ENCODE measurements at regions of chr5 and their contacts with region 1.

Region 1: GRCh38 chr5:112160652-112161391 is 258.3 kb downstream of the EPB41L4A start:
- DNase-seq: peak; percentile 95
- ATAC-seq: peak; percentile 99
- H3K4me3 ChIP-seq: peak overlapping the region; percentile 71 to 97 (median 90)
- H3K4me3 Mint-ChIP-seq: peak overlapping the region; percentile 96
- H3K27ac ChIP-seq: peak overlapping the region; percentile 52 to 83
- H3K27ac Mint-ChIP-seq: peak overlapping the region; percentile 90
- H3K4me1 ChIP-seq: peaks cover 14 to 20% of the 10 kb centered on the region in 2 donors
- H3K4me1 Mint-ChIP-seq: peaks cover 24% of the 10 kb centered on the region
- H3K27me3 ChIP-seq: no peaks in the 10 kb centered on the region
- H3K27me3 Mint-ChIP-seq: peaks cover 4% of the 10 kb centered on the region
- CTCF ChIP-seq: peak; percentile 88

Region 2: GRCh38 chr5:111757355-111758283 is 403.2 kb before region 1 on chr5:
- CTCF ChIA-PET with region 1: interaction called, 3 read pairs
- POLR2A ChIA-PET with region 1: interaction called, 4 read pairs
- intact Hi-C with region 1: loop called (anchors 1 kb)
- DNase-seq: peak; percentile 90
- ATAC-seq: peak; percentile 80
- H3K4me3 ChIP-seq: peak overlapping the region; percentile 68 to 83 (median 77)
- H3K4me3 Mint-ChIP-seq: peak overlapping the region; percentile 92
- H3K27ac ChIP-seq: peak overlapping the region; percentile 76 to 81
- H3K27ac Mint-ChIP-seq: peak overlapping the region; percentile 91
- H3K4me1 ChIP-seq: peaks cover 20 to 22% of the 10 kb centered on the region in 2 donors
- H3K4me1 Mint-ChIP-seq: peaks cover 21% of the 10 kb centered on the region
- H3K27me3 ChIP-seq: no peaks in the 10 kb centered on the region
- H3K27me3 Mint-ChIP-seq: peaks cover 7% of the 10 kb centered on the region
- CTCF ChIP-seq: no peak

Region 3: DNA sequence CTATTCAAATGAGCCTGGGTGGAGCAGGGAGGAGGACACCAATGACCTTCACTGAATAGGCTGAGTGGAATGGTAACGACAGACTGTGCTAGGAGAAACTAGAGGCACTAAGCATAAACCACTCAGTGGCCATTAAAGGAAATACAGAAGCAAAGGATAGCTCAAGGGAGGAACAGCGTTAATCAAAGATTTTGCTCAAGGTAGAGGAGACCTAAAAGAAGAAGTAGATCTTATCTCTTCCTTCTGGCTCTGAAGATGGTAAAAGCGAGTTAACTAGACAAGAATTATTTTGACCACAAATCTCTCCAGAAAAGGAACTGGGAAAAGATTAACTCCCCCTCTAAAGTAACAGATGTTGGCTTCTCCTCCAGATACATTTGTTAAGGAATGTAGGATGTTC is 41.3 kb before region 1 on chr5:
- CTCF ChIA-PET with region 1: no interaction called
- POLR2A ChIA-PET with region 1: no interaction called
- intact Hi-C with region 1: no loop called
- DNase-seq: no peak
- ATAC-seq: no peak
- H3K4me3 ChIP-seq: no peak overlapping the region
- H3K4me3 Mint-ChIP-seq: no peak overlapping the region
- H3K27ac ChIP-seq: no peak overlapping the region
- H3K27ac Mint-ChIP-seq: no peak overlapping the region
- H3K4me1 ChIP-seq: no peaks in the 10 kb centered on the region
- H3K4me1 Mint-ChIP-seq: no peaks in the 10 kb centered on the region
- H3K27me3 ChIP-seq: peaks cover 0 to 2% (median 0%) of the 10 kb centered on the region in 4 experiments
- H3K27me3 Mint-ChIP-seq: peaks cover 15% of the 10 kb centered on the region
- CTCF ChIP-seq: no peak

Region 4: DNA sequence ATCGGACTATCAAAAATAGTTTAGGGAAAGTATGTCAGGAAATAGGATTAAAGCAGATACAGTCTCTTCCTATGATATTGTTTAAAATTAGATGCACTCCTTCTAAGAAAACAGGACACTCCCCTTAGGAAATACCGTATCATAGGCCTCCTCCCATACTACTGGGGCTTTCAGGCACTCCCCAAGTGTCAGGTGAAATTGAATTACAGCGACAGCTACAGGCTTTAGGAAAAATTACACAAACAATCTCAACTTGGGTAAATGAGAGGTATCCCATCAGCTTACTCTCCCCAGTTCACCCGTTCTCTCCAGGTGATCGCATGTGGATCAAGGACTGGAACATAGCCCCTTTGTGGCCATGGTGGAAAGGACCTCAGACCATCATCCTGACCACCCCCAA is 368.7 kb after region 1 on chr5:
- CTCF ChIA-PET with region 1: interaction called, 3 read pairs
- POLR2A ChIA-PET with region 1: no interaction called
- intact Hi-C with region 1: loop called (anchors 5 kb)
- DNase-seq: peak; percentile 56
- ATAC-seq: no peak
- H3K4me3 ChIP-seq: no peak overlapping the region
- H3K4me3 Mint-ChIP-seq: no peak overlapping the region
- H3K27ac ChIP-seq: peak overlapping the region in 1 of 2 donors; percentile 61
- H3K27ac Mint-ChIP-seq: peak overlapping the region; percentile 85
- H3K4me1 ChIP-seq: peaks cover 81 to 83% of the 10 kb centered on the region in 2 donors
- H3K4me1 Mint-ChIP-seq: peaks cover 93% of the 10 kb centered on the region
- H3K27me3 ChIP-seq: no peaks in the 10 kb centered on the region
- H3K27me3 Mint-ChIP-seq: no peaks in the 10 kb centered on the region
- CTCF ChIP-seq: peak; percentile 66

Region 5: GRCh38 chr5:112921833-112922817 is 761.3 kb after region 1 on chr5 and contains the start of gene REEP5:
- CTCF ChIA-PET with region 1: no interaction called
- POLR2A ChIA-PET with region 1: no interaction called
- intact Hi-C with region 1: loop called (anchors 5 kb)
- DNase-seq: peak; percentile 91
- ATAC-seq: peak; percentile 74
- H3K4me3 ChIP-seq: peak within 1 kb of the TSS; percentile 70 to 91 (median 85)
- H3K4me3 Mint-ChIP-seq: peak within 1 kb of the TSS; percentile 94
- H3K27ac ChIP-seq: peak within 1 kb of the TSS; percentile 81 to 93
- H3K27ac Mint-ChIP-seq: peak within 1 kb of the TSS; percentile 95
- H3K4me1 ChIP-seq: peaks cover 79% of the 10 kb centered on the region in 2 donors
- H3K4me1 Mint-ChIP-seq: peaks cover 77% of the 10 kb centered on the region
- H3K27me3 ChIP-seq: no peaks in the 10 kb centered on the region
- H3K27me3 Mint-ChIP-seq: no peaks in the 10 kb centered on the region
- CTCF ChIP-seq: peak; percentile 80
- total RNA-seq, gene REEP5: 53.9 and 55.9 TPM in 2 replicates

Region 6: DNA sequence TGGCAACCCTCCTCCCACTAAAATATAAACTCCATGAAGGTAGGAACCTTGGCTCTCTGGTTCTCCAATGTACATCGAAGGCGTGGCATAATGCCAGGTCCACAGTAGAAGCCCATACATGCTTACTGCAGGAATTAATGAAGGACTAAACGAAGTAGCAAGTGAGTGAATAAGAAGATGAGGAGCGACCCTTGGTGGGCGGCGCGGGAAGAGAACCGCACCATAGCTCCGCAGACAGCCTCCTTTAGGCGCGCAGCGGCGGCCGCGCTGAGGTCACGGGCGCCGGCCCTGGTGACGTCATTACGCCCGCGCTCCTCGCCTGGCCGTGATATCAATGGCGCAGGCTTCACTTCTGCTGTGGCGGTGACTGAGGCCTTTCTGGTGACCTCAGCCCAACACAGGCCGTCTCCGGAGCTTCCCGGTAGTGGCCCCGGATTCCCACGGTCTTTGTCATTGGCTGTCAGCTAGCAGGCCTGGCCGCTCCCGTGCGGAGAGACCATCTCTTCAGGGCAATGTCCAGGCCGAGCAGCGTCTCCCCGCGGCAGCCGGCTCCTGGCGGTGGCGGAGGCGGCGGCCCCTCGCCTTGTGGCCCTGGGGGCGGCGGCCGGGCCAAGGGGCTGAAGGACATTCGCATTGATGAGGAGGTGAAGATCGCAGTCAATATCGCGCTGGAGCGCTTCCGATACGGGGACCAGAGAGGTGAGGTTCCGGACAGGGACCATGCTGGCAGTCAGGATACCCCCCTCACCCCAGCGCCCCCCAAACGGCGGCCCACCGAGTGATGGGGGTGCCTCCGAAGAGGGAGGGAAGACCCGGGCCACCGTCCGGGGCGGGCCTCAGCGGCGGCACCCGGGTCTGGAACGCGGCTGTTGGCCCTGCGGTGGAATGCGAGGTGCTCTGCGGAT is 1352.8 kb after region 1 on chr5 and contains the start of gene YTHDC2:
- CTCF ChIA-PET with region 1: no interaction called
- POLR2A ChIA-PET with region 1: no interaction called
- intact Hi-C with region 1: loop called (anchors 5 kb)
- DNase-seq: peak; percentile 93
- ATAC-seq: peak; percentile 97
- H3K4me3 ChIP-seq: peak within 1 kb of the TSS; percentile 59 to 93 (median 84)
- H3K4me3 Mint-ChIP-seq: peak within 1 kb of the TSS; percentile 99
- H3K27ac ChIP-seq: peak within 1 kb of the TSS; percentile 83 to 93
- H3K27ac Mint-ChIP-seq: peak within 1 kb of the TSS; percentile 95
- H3K4me1 ChIP-seq: peaks cover 7 to 17% of the 10 kb centered on the region in 2 donors
- H3K4me1 Mint-ChIP-seq: peaks cover 30% of the 10 kb centered on the region
- H3K27me3 ChIP-seq: peaks cover 0 to 8% (median 3%) of the 10 kb centered on the region in 4 experiments
- H3K27me3 Mint-ChIP-seq: peaks cover 18% of the 10 kb centered on the region
- CTCF ChIP-seq: peak; percentile 18
- total RNA-seq, gene YTHDC2: 52.6 and 62.4 TPM in 2 replicates

Measured in B cell (primary cell).